Activated CD8-positive, alpha-beta memory T cell treated with anti-CD3 and anti-CD28 coated beads, Interleukin-2, amount 10 ng/mL, durations not matched to agents 7 days and 5 days (primary cell): ENCODE measurements at regions of chr6 and their contacts with region 1.

Region 1: DNA sequence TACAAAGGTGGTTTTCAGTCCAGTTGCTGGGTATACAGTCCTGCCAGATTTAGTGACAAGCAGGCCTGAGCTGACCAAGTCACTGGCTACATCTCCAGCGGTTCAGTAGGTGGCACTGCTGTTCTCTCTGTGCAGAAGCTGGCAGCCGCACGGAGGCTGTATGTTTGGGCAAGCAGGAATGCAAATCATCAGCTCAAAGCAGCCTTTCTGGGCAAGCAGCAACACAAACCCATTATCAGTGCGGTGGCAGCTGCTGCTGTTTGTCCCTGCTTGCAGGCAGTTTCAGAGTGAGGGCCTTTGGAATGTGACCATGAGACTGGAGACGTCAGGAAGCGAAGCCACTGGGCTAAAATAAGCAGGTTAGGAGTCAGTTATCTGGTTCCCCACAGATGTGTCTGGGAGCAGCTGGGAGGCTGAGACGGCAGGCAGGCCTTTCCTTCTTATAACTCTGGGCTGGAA is 72.5 kb downstream of the TXLNB start:
- DNase-seq: peak; percentile 86
- ATAC-seq: peak; percentile 100
- H3K4me3 Mint-ChIP-seq: no peak overlapping the region
- H3K27ac Mint-ChIP-seq: peak overlapping the region; percentile 48
- H3K4me1 Mint-ChIP-seq: peaks cover 9% of the 10 kb centered on the region
- H3K27me3 Mint-ChIP-seq: no peaks in the 10 kb centered on the region

Region 2: DNA sequence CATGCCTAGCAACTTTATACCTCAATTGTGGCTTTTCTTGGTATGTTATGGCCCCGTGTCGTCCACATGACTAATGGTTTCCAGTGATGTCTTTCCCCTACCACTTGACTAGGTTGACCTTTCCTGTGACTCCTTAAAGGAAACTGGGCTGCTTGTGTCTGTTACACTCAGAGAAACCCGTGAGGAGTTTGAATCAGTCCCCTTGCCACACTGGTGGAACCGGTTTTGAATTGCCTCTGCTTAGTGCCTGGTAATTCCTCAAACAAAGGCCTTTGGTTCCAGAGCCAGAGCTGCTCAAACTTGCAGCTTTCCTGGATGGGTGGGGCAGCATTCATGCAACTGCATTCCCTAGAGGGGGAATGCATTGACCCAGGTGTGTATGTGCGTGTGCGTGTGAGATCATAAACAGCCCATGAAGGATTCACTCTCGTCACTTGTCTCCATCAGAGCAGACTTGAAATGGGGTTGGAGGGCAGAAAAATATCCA is 401.4 kb before region 1 on chr6:
- CTCF ChIA-PET with region 1: interaction called, 16 read pairs
- DNase-seq: peak; percentile 44
- ATAC-seq: peak; percentile 34
- H3K4me3 Mint-ChIP-seq: no peak overlapping the region
- H3K27ac Mint-ChIP-seq: peak overlapping the region; percentile 50
- H3K4me1 Mint-ChIP-seq: peaks cover 25% of the 10 kb centered on the region
- H3K27me3 Mint-ChIP-seq: no peaks in the 10 kb centered on the region

Region 3: DNA sequence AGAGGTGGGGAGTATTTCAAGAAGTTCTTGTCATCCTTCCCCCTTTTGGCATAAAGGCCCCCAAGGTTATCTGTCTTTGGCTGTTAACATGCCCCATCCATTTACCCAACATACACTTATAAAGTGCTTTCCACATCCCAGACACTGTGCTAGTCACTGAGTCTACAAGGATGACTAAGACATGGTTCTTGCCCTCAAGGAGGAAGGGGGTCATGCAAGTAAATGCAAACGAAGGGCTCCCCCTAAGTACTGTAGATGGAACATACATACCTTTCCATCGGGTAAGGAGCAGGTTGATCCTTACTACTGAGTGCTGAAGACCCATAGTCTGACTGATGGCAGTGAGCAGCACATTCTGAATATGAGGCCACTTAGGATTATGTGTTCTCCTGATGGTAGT is 46.1 kb before region 1 on chr6:
- CTCF ChIA-PET with region 1: interaction called, 10 read pairs
- DNase-seq: no peak
- ATAC-seq: peak; percentile 90
- H3K4me3 Mint-ChIP-seq: no peak overlapping the region
- H3K27ac Mint-ChIP-seq: peak overlapping the region; percentile 70
- H3K4me1 Mint-ChIP-seq: peaks cover 84% of the 10 kb centered on the region
- H3K27me3 Mint-ChIP-seq: no peaks in the 10 kb centered on the region

Region 4: GRCh38 chr6:139291813-139292619 is 72.7 kb after region 1 on chr6 and contains the start of gene TXLNB:
- CTCF ChIA-PET with region 1: interaction called, 25 read pairs
- DNase-seq: peak; percentile 93
- ATAC-seq: peak; percentile 87
- H3K4me3 Mint-ChIP-seq: peak within 1 kb of the TSS; percentile 77
- H3K27ac Mint-ChIP-seq: peak within 1 kb of the TSS; percentile 99
- H3K4me1 Mint-ChIP-seq: peaks cover 35% of the 10 kb centered on the region
- H3K27me3 Mint-ChIP-seq: no peaks in the 10 kb centered on the region
- total RNA-seq, gene TXLNB: 0.23 to 0.38 TPM

Region 5: GRCh38 chr6:139303185-139303584 is 83.9 kb after region 1 on chr6:
- CTCF ChIA-PET with region 1: no interaction called
- DNase-seq: no peak
- ATAC-seq: no peak
- H3K4me3 Mint-ChIP-seq: no peak overlapping the region
- H3K27ac Mint-ChIP-seq: no peak overlapping the region
- H3K4me1 Mint-ChIP-seq: no peaks in the 10 kb centered on the region
- H3K27me3 Mint-ChIP-seq: no peaks in the 10 kb centered on the region

Region 6: GRCh38 chr6:139364302-139364981 is 145.1 kb after region 1 on chr6:
- CTCF ChIA-PET with region 1: interaction called, 110 read pairs
- DNase-seq: no peak
- ATAC-seq: peak; percentile 28
- H3K4me3 Mint-ChIP-seq: no peak overlapping the region
- H3K27ac Mint-ChIP-seq: peak overlapping the region; percentile 39
- H3K4me1 Mint-ChIP-seq: peaks cover 48% of the 10 kb centered on the region
- H3K27me3 Mint-ChIP-seq: no peaks in the 10 kb centered on the region